T-cell (primary cell): ENCODE measurements at regions of chr16 and their contacts with region 1.

Region 1: GRCh38 chr16:19601083-19601976 is 45.8 kb downstream of the VPS35L start:
- DNase-seq: peak in 24 of 35 experiments; percentile 1 to 69 (median 18)
- ATAC-seq: no peak
- H3K4me3 ChIP-seq: no peak overlapping the region
- H3K4me3 Mint-ChIP-seq: no peak overlapping the region
- H3K27ac ChIP-seq: no peak overlapping the region
- H3K27ac Mint-ChIP-seq: peak overlapping the region in 1 of 2 donors; percentile 11
- H3K4me1 ChIP-seq: no peaks in the 10 kb centered on the region
- H3K4me1 Mint-ChIP-seq: no peaks in the 10 kb centered on the region
- H3K27me3 ChIP-seq: no peaks in the 10 kb centered on the region
- H3K27me3 Mint-ChIP-seq: no peaks in the 10 kb centered on the region

Region 2: DNA sequence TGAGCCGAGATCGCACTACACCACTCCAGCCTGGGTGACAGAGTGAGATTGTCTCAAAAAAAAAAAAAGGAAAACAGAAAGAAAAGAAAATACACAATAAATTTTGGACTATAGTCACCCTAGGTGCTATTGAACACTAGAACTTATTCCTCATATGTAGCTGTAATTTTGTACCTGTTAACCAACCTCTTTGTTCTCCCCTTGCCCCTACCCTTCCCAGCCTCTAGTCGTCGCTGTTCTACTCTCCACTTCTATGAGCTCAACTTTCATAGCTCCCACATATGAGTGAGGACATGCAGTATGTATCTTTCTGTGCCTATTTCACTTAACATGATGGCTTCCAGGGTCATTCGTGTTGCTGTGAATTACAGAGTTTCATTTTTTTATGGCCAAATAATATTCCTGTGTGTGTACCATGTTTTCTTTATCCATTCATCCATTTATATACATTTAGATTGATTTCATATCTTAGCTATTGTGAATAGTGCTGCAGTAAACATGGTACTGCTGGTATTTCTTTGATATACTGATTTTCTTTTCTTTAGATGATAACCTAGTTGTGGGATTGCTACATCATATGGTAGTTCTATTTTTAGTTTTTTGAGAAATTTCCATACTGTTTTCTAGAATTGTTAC is 17.5 kb before region 1 on chr16:
- CTCF ChIA-PET with region 1: interaction called, 4 to 15 read pairs
- POLR2A ChIA-PET with region 1: no interaction called
- DNase-seq: peak in 14 of 35 experiments; percentile 2 to 59 (median 12)
- ATAC-seq: peak; percentile 53 to 77 (median 58)
- H3K4me3 ChIP-seq: no peak overlapping the region
- H3K4me3 Mint-ChIP-seq: no peak overlapping the region
- H3K27ac ChIP-seq: no peak overlapping the region
- H3K27ac Mint-ChIP-seq: no peak overlapping the region
- H3K4me1 ChIP-seq: no peaks in the 10 kb centered on the region
- H3K4me1 Mint-ChIP-seq: peaks cover 0 to 4% (median 0%) of the 10 kb centered on the region in 3 donors
- H3K27me3 ChIP-seq: no peaks in the 10 kb centered on the region
- H3K27me3 Mint-ChIP-seq: no peaks in the 10 kb centered on the region

Region 3: GRCh38 chr16:19886073-19886941 is 285.0 kb after region 1 on chr16:
- CTCF ChIA-PET with region 1: interaction called, 14 to 46 read pairs
- POLR2A ChIA-PET with region 1: no interaction called
- DNase-seq: peak; percentile 55 to 88 (median 72)
- ATAC-seq: peak; percentile 51 to 58 (median 54)
- H3K4me3 ChIP-seq: peak overlapping the region; percentile 10 to 52
- H3K4me3 Mint-ChIP-seq: peak overlapping the region; percentile 82 to 92 (median 87)
- H3K27ac ChIP-seq: no peak overlapping the region
- H3K27ac Mint-ChIP-seq: no peak overlapping the region
- H3K4me1 ChIP-seq: peaks cover 2 to 34% of the 10 kb centered on the region in 2 experiments
- H3K4me1 Mint-ChIP-seq: peaks cover 25 to 30% (median 25%) of the 10 kb centered on the region in 3 donors
- H3K27me3 ChIP-seq: peaks cover 0 to 52% of the 10 kb centered on the region in 2 experiments
- H3K27me3 Mint-ChIP-seq: peaks cover 16 to 28% of the 10 kb centered on the region in 2 donors